Activated CD4-positive, alpha-beta T cell treated with anti-CD3 and anti-CD28 coated beads for 36 hours (primary cell): ENCODE measurements at regions of chr4 and their contacts with region 1.

Region 1: DNA sequence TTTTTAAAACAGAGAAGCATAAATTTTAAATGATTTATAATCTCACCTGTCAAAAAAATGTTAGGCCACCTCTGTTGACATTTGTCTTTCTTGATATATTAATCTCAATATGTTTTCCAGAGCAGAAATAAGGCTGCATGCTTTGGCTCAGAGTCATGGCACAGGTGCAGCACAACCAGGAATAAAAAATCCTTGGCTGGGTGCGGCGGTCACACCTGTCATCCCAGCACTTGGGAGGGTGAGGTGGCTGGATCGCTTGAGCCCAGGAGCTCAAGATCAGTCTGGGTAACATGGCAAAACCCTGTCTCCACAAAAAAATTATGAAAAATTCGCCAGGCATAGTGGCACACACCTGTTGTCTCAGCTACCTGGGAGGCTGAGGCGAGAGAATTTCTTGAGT is 18.1 kb downstream of the CPLX1 start:
- DNase-seq: no peak
- ATAC-seq: no peak
- H3K4me3 Mint-ChIP-seq: no peak overlapping the region
- H3K27ac Mint-ChIP-seq: no peak overlapping the region
- H3K4me1 Mint-ChIP-seq: no peaks in the 10 kb centered on the region
- H3K27me3 Mint-ChIP-seq: peaks cover 21% of the 10 kb centered on the region

Region 2: DNA sequence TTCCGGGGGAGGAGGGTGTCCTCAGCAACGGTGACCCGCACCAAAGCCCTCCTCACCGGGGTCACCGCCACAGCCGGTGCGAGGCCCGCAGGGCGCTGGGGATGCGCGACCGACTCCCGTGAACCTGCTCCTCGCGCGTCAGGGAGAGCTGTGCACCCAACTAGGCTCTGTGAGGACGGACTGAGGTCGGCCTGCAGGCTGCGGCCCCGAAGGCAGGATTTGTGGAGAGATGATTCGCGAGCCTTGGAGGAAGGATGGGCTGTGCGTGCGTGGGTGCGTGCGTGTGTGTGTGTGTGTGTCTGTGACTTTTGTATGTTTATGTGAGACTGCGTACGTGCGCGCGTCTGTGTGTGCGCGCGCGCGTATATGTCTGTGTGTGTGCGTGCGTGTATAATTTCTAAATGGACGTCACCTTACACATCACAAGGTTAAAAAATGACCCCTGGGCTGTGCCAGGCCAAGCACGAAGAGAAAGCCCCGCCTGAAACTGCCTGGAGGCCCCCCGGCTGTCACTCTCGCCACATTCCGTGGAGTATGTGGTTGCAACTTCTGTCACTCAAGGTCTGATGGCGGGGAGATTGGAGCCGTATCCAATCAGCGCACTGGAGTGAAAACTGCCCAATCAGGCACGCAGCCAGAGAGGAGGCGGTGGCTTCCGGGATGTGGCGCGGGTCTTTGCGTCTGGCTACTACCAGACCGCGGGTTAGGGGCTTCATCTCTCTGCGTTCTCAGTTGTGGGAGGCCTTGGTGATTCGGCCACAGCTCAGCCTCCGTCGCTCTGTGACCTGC is 470.5 kb before region 1 on chr4 and contains the start of gene ZNF141:
- CTCF ChIA-PET with region 1: no interaction called
- POLR2A ChIA-PET with region 1: no interaction called
- intact Hi-C with region 1: no loop called
- DNase-seq: peak; percentile 95
- ATAC-seq: peak; percentile 96
- H3K4me3 Mint-ChIP-seq: peak within 1 kb of the TSS; percentile 99
- H3K27ac Mint-ChIP-seq: peak within 1 kb of the TSS; percentile 100
- H3K4me1 Mint-ChIP-seq: peaks cover 24% of the 10 kb centered on the region
- H3K27me3 Mint-ChIP-seq: no peaks in the 10 kb centered on the region
- total RNA-seq, gene ZNF141: 26.5 to 35.3 TPM

Region 3: DNA sequence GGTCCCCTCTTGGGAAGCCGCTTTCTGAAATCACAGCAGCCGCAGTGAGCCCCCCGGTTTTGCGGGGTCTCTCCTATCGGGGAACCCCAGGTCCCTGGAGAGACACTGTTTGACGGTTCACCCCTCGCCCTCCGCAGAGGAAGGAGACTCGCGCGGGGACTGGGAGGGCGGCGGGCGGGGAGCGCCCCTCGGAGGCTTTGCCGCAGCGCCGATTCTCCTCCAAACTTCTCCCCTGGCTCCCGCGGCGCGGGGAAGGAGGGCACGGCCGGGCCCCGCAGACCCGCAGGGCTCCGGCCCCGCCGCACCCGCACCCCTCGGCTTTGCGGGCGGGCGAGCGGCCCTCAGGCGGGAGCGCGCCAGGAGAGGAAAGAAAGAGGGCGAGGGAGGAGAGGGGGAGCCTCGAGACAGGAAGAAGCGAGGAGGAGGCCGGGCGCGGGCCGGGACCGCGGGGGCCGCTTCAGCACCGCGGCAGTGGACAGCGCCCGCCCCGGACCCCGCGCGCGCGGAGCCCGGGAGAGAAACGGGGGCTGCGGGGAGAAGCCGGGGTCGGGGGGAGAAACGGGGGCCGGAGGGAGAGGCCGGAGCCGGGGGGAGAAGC is 17.5 kb after region 1 on chr4:
- CTCF ChIA-PET with region 1: no interaction called
- POLR2A ChIA-PET with region 1: no interaction called
- intact Hi-C with region 1: loop called in 1 of 2 experiments (anchors 2 kb)
- DNase-seq: peak; percentile 50
- ATAC-seq: peak; percentile 37
- H3K4me3 Mint-ChIP-seq: no peak overlapping the region
- H3K27ac Mint-ChIP-seq: no peak overlapping the region
- H3K4me1 Mint-ChIP-seq: no peaks in the 10 kb centered on the region
- H3K27me3 Mint-ChIP-seq: peaks cover 35% of the 10 kb centered on the region

Region 4: DNA sequence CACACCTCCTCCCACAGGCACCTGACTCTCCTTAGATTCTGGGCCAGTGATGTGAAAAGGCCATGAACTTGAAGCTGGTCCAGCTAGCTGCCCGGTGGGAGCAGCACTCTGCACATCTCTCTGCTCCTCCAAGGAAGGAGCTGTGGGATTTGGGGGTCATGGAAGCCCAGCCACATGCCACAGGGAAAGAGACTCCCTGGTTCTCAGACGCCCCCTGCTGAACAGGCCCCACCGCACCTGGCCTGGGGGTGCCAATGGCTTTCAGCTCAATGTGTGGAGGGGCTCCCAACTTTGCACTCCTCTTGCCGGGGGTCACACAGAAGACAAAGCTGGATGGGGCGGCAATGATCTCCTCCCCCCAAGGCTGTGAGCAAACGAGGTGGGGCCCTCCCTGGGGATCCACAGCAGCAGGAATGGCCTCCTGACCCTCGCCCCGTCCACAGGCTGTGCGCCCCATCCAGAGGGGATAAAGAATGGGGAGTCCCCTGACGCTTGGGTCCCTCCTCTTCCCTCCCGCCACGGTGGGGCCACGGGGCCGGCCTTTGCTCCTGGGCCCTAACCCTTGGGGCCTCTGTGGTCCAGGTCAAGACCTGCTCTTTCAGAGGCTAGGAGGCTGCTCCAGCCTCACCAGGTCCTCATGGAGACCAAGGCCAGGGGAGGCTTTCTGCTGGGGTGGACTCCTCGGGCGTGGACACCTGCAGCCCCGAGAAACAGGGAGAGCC is 73.1 kb after region 1 on chr4:
- CTCF ChIA-PET with region 1: no interaction called
- POLR2A ChIA-PET with region 1: no interaction called
- intact Hi-C with region 1: no loop called
- DNase-seq: no peak
- ATAC-seq: no peak
- H3K4me3 Mint-ChIP-seq: no peak overlapping the region
- H3K27ac Mint-ChIP-seq: peak overlapping the region; percentile 98
- H3K4me1 Mint-ChIP-seq: peaks cover 28% of the 10 kb centered on the region
- H3K27me3 Mint-ChIP-seq: no peaks in the 10 kb centered on the region